K562 (cell line): ENCODE measurements at regions of chr1 and their contacts with region 1.

Region 1: DNA sequence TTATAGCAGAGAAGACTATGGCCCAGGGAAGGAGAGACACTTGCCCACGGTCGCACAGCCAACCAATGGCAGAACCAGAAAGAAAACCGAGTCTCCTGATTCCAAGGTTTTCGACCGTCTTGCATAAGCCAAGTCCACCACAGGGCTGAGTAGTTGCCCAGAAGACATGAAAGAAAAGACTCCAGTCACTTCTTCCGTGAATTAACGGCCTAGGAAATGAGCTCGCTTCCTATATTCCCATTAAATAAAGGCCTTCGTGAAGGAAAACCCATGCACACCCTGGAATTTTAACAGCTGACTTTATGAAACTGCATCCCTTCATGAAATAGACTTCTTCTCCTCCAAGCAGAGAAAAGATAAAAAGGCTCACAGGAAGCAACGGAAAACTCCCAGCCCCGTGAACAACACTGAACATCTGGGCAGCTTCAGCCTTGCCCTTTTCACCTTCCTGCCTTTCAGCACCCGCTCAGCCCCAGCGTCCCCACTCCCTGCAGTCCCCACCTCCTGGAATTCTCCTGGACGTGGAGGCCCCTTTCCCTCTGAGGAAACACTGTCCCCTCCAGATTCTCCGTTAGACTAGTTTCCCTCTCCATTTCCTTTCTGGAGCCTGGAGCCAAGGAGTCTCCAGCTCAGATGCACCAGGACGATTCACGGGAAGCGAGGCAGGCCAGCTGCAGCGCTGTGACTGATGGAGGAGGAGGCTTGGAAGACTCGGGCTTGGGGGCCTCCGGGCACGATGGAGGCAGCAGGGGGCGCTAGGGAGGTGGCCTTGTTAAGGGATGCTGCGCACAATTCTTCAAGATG is 2.7 kb upstream of the MYOC start:
- DNase-seq: peak; percentile 67 to 89 (median 74)
- ATAC-seq: peak; percentile 96
- H3K4me3 ChIP-seq: no peak overlapping the region
- H3K27ac ChIP-seq: no peak overlapping the region
- H3K4me1 ChIP-seq: peaks cover 0 to 9% of the 10 kb centered on the region in 2 experiments; a peak in 2 of 5 replicates
- H3K27me3 ChIP-seq: peaks cover 28% of the 10 kb centered on the region in 2 experiments
- CTCF ChIP-seq: peak; percentile 89 to 97 (median 92)
- EP300 ChIP-seq: no peak; the same call in 1 of the 2 replicates
- POLR2A ChIP-seq: no peak
- RAD21 ChIP-seq: peak; percentile 66 to 85

Region 2: DNA sequence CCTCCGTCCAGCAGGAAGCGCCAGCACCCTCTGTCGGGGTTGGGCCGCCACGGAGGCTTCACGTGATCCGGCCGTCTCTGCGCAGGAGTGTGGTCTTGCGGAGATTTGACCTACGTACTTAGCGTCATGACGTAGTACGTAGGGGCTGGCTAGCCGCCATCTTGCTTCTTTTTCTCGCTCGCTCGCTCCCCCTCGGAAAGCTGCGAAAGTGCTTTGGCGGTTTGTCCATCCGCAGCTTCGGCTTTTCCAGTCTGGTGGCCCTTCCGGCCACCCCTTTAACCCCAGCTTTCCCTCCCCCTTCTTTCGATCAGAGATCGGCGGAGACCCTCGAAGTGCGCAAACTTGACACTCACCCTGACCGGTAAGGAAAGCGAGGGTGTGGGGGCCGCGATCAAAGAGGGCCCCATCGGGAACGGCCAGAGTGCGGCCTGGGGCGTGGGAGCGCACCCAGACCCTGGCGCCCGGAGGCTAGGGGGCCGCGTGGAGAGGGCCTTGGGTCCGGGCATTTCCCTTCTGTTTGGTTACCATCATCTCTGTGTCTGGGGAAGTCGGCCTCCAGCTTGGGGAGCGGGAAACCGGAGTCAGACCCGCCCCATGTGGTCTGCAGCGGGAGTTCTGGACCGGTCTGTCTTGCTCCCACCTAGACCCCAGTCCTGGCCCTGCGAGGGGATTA is 169.6 kb before region 1 on chr1 and contains the start of gene PRRC2C:
- CTCF ChIA-PET with region 1: no interaction called
- POLR2A ChIA-PET with region 1: no interaction called
- in situ Hi-C with region 1: no loop called
- intact Hi-C with region 1: no loop called
- DNase-seq: peak; percentile 92 to 99 (median 93)
- ATAC-seq: peak; percentile 95
- H3K4me3 ChIP-seq: peak within 1 kb of the TSS; percentile 91
- H3K27ac ChIP-seq: peak within 1 kb of the TSS; percentile 93
- H3K4me1 ChIP-seq: peaks cover 3 to 11% of the 10 kb centered on the region in 2 experiments; a peak in 4 of 5 replicates
- H3K27me3 ChIP-seq: no peaks in the 10 kb centered on the region
- CTCF ChIP-seq: peak; percentile 85 to 97 (median 95)
- EP300 ChIP-seq: peak; percentile 54
- POLR2A ChIP-seq: peak; percentile 95
- RAD21 ChIP-seq: peak; percentile 69 to 76
- polyA plus RNA-seq, gene PRRC2C: 61.9 to 93.0 TPM

Region 3: GRCh38 chr1:171506525-171507304 is 148.4 kb before region 1 on chr1:
- CTCF ChIA-PET with region 1: no interaction called
- POLR2A ChIA-PET with region 1: no interaction called
- in situ Hi-C with region 1: no loop called
- intact Hi-C with region 1: no loop called
- DNase-seq: no peak
- ATAC-seq: peak; percentile 35
- H3K4me3 ChIP-seq: no peak overlapping the region
- H3K27ac ChIP-seq: no peak overlapping the region
- H3K4me1 ChIP-seq: peaks cover 0 to 3% of the 10 kb centered on the region in 2 experiments; a peak in 2 of 5 replicates
- H3K27me3 ChIP-seq: no peaks in the 10 kb centered on the region
- CTCF ChIP-seq: no peak
- EP300 ChIP-seq: no peak
- POLR2A ChIP-seq: no peak
- RAD21 ChIP-seq: no peak

Region 4: GRCh38 chr1:171668372-171668771 is 13.2 kb after region 1 on chr1:
- CTCF ChIA-PET with region 1: no interaction called
- POLR2A ChIA-PET with region 1: interaction called, 11 read pairs
- in situ Hi-C with region 1: no loop called
- intact Hi-C with region 1: no loop called
- DNase-seq: no peak
- ATAC-seq: no peak
- H3K4me3 ChIP-seq: no peak overlapping the region
- H3K27ac ChIP-seq: no peak overlapping the region
- H3K4me1 ChIP-seq: peaks cover 0 to 5% of the 10 kb centered on the region in 2 experiments; a peak in 3 of 5 replicates
- H3K27me3 ChIP-seq: peaks cover 26 to 38% of the 10 kb centered on the region in 2 experiments
- CTCF ChIP-seq: no peak
- EP300 ChIP-seq: no peak
- POLR2A ChIP-seq: no peak
- RAD21 ChIP-seq: no peak

Region 5: DNA sequence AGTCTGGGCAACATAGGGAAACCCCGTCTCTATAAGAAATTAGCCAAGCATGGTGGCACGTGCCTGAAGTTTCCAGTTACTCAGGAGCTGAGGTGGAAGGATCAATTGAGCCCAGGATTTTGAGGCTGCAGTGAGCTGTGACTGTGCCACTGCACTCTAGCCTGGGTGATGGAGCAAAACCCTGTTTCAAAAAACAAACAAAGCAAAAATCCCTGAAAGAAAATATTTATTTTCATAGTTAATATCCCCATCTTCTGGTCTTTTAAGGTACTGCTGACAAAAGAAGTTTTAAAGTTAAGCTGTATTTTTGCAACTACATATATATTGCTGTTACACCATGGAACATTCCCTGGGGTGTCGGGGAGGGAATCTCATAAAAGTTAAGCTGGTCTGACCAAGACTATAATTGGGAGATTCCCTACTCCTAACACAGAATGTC is 60.7 kb after region 1 on chr1:
- CTCF ChIA-PET with region 1: no interaction called
- POLR2A ChIA-PET with region 1: interaction called, 3 read pairs
- in situ Hi-C with region 1: no loop called
- intact Hi-C with region 1: loop called (anchors 1 kb)
- DNase-seq: peak in 1 of 4 experiments; percentile 23
- ATAC-seq: peak; percentile 55
- H3K4me3 ChIP-seq: no peak overlapping the region
- H3K27ac ChIP-seq: no peak overlapping the region
- H3K4me1 ChIP-seq: peaks cover 0 to 4% of the 10 kb centered on the region in 2 experiments; a peak in 2 of 5 replicates
- H3K27me3 ChIP-seq: no peaks in the 10 kb centered on the region
- CTCF ChIP-seq: peak; percentile 30 to 66 (median 45); a peak in 4 of 6 replicates
- EP300 ChIP-seq: no peak
- POLR2A ChIP-seq: no peak
- RAD21 ChIP-seq: peak; percentile 37 to 48; a peak in 3 of 4 replicates

Region 6: DNA sequence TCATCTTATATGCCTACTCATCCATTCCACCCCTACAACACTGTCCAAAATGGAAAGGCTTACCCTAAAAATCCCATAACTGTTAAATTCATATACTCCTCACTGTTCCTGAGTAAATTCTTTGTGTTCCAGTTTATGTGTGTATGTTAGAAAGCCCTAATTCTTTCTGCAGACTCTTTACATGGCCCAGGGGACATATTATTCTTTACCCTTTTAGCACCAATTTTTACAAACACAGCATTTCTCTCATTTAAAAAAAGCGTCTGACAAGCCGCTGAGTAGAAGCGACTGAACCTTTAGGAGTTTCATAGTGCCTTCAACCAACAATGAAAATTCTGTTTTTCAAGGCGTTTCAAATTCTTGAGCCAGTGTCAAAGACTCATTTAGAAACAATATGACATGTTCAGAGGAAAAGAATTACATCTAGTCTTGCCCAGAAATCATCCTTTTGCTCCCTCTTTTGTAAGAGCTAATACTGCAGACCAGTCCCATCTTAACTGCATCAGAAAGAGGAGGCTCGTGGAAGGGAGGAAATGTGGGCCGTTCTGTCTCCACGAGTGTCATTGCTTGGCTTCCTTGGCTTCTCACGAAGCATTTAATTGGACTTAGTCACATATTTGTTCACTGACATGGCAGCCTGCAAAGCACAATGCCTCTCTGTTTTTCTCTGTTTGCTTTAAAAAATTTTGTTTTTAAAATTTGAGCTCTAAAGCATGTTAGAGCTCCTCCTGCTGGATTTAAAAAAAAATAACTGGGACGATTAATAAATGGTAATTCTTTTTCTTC is 744.0 kb after region 1 on chr1:
- CTCF ChIA-PET with region 1: no interaction called
- POLR2A ChIA-PET with region 1: no interaction called
- in situ Hi-C with region 1: no loop called
- intact Hi-C with region 1: loop called (anchors 10 kb)
- DNase-seq: peak in 2 of 4 experiments; percentile 22 to 25
- ATAC-seq: peak; percentile 39; the same call in 2 of the 3 replicates
- H3K4me3 ChIP-seq: no peak overlapping the region
- H3K27ac ChIP-seq: no peak overlapping the region
- H3K4me1 ChIP-seq: no peaks in the 10 kb centered on the region; a peak in 1 of 5 replicates
- H3K27me3 ChIP-seq: 0 out of 5 replicates have a peak, but pooled peaks cover 0 to 4% of the 10 kb centered on the region in 2 experiments
- CTCF ChIP-seq: peak; percentile 39 to 82 (median 59); a peak in 4 of 6 replicates
- EP300 ChIP-seq: no peak
- POLR2A ChIP-seq: no peak
- RAD21 ChIP-seq: peak; percentile 83 to 86